ENCODE measurements at regions of chr6 and their contacts with region 1.

Region 1: GRCh38 chr6:149565527-149566409 is at the start of gene GINM1:
- DNase-seq: peak; percentile 93
- ATAC-seq: peak; percentile 90
- H3K4me3 ChIP-seq: peak within 1 kb of the TSS; percentile 97 to 98 (median 98)
- H3K27ac ChIP-seq: peak within 1 kb of the TSS; percentile 87
- H3K4me1 ChIP-seq: peaks cover 42% of the 10 kb centered on the region
- H3K27me3 ChIP-seq: no peaks in the 10 kb centered on the region; a peak in 1 of 5 replicates
- CTCF ChIP-seq: peak; percentile 87
- EP300 ChIP-seq: no peak
- POLR2A ChIP-seq: 0 out of 4 replicates have a peak, but pooled peaks of 1 of the 2 experiments have one; percentile 6
- RAD21 ChIP-seq: peak; percentile 70
- total RNA-seq, gene GINM1: 15.4 and 27.5 TPM in 2 replicates

Region 2: DNA sequence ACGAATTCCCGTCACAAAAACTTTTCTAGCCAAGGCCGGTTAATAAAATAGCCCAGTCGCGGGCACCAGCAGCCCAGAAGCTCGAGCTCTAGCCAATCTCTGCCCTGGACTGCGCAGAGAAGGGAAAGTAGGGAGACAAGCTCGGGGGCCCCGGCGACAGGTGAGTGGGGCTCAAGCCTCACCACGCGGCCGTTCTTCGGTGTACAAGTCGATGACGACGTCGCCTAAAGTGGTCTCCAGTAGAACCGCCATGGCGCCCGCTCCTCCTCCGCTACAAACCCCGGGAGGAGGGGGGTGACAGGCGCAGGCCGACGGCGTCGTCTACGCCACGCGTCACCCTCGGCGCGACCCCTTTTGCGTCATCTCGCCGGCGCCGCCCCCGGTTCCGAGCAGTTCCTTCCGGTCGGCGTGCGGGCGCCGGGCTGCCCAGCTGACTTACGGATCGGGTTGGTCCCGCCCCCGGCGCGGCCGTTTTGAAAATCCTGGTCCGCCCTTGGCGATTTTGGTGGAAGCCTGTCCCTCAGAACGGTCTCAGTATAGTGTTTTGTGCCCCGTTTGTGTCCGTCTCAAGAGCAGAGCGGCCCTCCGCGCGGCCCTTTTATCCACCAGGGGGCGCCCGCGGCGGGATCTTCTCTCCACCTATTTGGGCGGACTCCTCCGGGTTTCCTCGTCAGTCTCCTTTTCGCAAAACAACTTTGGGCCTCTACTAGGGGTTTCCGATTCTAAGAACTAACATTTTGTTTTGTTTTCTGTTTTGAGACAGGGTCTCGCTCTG is 19.8 kb before region 1 on chr6 and contains the start of gene PPIL4:
- CTCF ChIA-PET with region 1: no interaction called
- POLR2A ChIA-PET with region 1: interaction called, 36 read pairs
- in situ Hi-C with region 1: no loop called
- intact Hi-C with region 1: loop called (anchors 1 kb)
- DNase-seq: peak; percentile 89
- ATAC-seq: peak; percentile 88
- H3K4me3 ChIP-seq: peak within 1 kb of the TSS; percentile 87 to 97 (median 91)
- H3K27ac ChIP-seq: peak within 1 kb of the TSS; percentile 96
- H3K4me1 ChIP-seq: peaks cover 43% of the 10 kb centered on the region
- H3K27me3 ChIP-seq: no peaks in the 10 kb centered on the region; a peak in 2 of 5 replicates
- CTCF ChIP-seq: peak; percentile 85
- EP300 ChIP-seq: peak; percentile 56 to 71; a peak in 2 of 4 replicates
- POLR2A ChIP-seq: peak; percentile 81 to 93
- RAD21 ChIP-seq: peak; percentile 70
- total RNA-seq, gene PPIL4: 46.0 and 67.8 TPM in 2 replicates

Region 3: GRCh38 chr6:149648148-149649145 is 82.7 kb after region 1 on chr6 and contains the start of gene KATNA1:
- CTCF ChIA-PET with region 1: no interaction called
- POLR2A ChIA-PET with region 1: interaction called, 4 read pairs
- in situ Hi-C with region 1: loop called (anchors 5 kb)
- intact Hi-C with region 1: loop called (anchors 1 kb)
- DNase-seq: peak; percentile 96
- ATAC-seq: peak; percentile 98
- H3K4me3 ChIP-seq: peak within 1 kb of the TSS; percentile 74 to 85 (median 84)
- H3K27ac ChIP-seq: peak within 1 kb of the TSS; percentile 78
- H3K4me1 ChIP-seq: peaks cover 25% of the 10 kb centered on the region
- H3K27me3 ChIP-seq: no peaks in the 10 kb centered on the region; a peak in 1 of 5 replicates
- CTCF ChIP-seq: peak; percentile 68
- EP300 ChIP-seq: peak in 1 of 2 experiments; percentile 41; a peak in 1 of 4 replicates
- POLR2A ChIP-seq: peak; percentile 94 to 96
- RAD21 ChIP-seq: peak; percentile 71
- total RNA-seq, gene KATNA1: 25.3 and 31.2 TPM in 2 replicates

Region 4: DNA sequence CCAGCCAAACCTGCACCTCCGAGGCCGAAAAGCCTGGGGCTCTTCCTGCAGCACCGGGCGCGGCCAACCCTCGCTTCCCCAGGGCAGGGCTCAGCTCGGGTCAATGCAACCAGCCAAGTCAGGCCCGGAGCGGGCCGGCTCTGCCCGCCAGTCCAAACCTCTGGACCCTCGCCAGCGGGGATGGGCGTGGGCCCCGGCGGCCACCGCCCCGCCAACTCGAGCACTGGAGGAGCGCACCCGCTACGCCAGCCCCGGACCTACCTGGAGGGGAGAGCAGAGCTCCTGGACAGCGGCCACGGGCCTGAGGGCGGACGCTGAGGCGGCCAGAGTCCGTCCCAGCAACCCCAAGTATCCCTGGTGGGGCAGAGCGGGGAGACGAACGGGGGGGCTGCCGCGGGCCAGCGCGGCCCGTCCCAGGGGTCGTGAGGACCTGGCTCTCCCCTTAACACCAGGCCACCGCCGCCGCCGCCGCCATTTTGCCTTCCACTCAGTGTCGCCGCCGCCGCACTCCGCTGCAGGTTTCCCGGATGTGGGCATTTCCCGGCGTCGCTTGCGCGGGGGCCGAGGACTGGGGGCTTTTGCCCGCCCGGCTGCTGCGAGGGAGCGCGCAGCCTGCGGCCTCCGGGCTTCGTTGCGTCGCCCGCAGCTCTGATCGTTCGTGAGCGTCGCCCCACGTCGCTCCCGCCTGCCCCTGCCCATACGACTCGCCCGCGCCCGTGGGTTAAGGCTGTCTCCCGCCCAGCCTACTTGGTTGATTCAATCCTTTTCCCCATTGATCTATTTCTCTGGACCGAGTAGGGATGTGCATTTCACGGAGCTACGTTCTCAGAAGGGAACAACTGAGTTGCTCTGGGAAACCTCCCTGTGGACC is 152.1 kb after region 1 on chr6 and contains the start of gene LATS1:
- CTCF ChIA-PET with region 1: no interaction called
- POLR2A ChIA-PET with region 1: interaction called, 15 read pairs
- in situ Hi-C with region 1: loop called (anchors 10 kb)
- intact Hi-C with region 1: loop called (anchors 5 kb)
- DNase-seq: peak; percentile 81
- ATAC-seq: peak; percentile 94
- H3K4me3 ChIP-seq: peak within 1 kb of the TSS; percentile 79 to 97 (median 96)
- H3K27ac ChIP-seq: peak within 1 kb of the TSS; percentile 97
- H3K4me1 ChIP-seq: peaks cover 23% of the 10 kb centered on the region
- H3K27me3 ChIP-seq: no peaks in the 10 kb centered on the region; a peak in 1 of 5 replicates
- CTCF ChIP-seq: peak; percentile 29; the same call in 1 of the 2 replicates
- EP300 ChIP-seq: peak in 1 of 2 experiments; percentile 51; a peak in 1 of 4 replicates
- POLR2A ChIP-seq: peak; percentile 95 to 99
- RAD21 ChIP-seq: peak; percentile 63
- total RNA-seq, gene LATS1: 12.6 and 16.4 TPM in 2 replicates

Region 5: DNA sequence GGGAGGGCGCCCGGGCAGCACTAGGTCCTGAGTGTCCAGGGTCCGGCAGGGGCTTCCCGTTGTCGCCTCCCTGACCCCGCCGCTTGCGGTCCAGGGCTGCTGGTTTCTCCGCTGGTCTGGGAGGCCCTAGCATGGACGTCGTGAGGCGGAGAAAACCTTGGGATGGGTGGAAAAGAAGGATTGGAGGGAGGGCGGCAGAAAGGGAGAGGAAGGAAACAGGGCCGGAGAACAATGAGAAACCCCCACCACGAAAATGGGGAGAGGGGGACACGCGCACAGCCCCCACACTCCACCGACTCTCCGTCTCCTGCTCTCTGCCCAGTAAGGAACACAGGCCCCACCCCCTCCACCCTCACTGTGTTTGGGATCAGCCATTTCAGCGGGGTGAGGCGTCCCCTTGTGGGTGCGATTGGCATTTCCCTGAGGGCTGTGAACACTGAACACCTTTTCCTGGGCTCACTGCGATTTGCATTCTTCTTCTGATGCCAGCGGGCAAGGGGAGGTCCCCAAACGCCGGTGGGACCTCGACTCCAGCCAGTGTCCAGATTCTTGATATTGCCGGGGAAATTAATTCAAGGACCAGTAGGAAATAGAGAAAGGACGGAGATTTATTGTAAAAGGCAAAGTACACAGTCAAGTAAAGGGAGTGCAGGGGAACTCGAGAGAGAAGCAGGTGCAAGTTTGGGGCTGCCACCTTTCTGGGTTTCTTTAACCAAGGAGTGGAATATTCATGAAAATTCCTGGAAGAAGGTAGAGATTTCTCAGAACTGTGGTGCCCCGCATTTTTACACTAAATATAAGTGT is 360.4 kb after region 1 on chr6:
- CTCF ChIA-PET with region 1: no interaction called
- POLR2A ChIA-PET with region 1: no interaction called
- in situ Hi-C with region 1: no loop called
- intact Hi-C with region 1: loop called (anchors 2 kb)
- DNase-seq: peak; percentile 74
- ATAC-seq: peak; percentile 90
- H3K4me3 ChIP-seq: peak overlapping the region; percentile 65 to 82 (median 71)
- H3K27ac ChIP-seq: no peak overlapping the region
- H3K4me1 ChIP-seq: peaks cover 34% of the 10 kb centered on the region
- H3K27me3 ChIP-seq: peaks cover 13 to 55% of the 10 kb centered on the region in 2 experiments
- CTCF ChIP-seq: peak; percentile 99
- EP300 ChIP-seq: no peak
- POLR2A ChIP-seq: no peak
- RAD21 ChIP-seq: peak; percentile 93

Region 6: DNA sequence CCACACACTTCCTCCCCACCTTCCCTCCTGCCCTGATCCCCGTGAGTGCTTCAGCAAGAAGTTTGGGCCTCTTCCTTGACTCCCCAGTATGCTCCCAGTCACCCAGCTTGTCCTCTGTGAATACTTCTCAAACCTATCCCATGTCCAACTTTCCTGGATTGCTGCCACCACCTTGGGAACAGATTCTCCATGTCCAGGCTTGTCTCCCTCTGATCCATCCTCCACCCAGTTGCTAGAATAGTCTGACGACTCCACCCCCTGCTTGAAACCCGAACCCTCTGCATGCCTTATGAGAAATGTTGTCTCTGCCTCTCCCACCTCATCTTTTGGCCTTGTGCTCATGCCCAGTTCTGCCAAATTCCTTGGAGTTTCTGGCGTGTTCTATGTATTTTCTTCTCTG is 685.1 kb after region 1 on chr6:
- CTCF ChIA-PET with region 1: no interaction called
- POLR2A ChIA-PET with region 1: no interaction called
- in situ Hi-C with region 1: no loop called
- intact Hi-C with region 1: no loop called
- DNase-seq: no peak
- ATAC-seq: no peak
- H3K4me3 ChIP-seq: no peak overlapping the region
- H3K27ac ChIP-seq: no peak overlapping the region
- H3K4me1 ChIP-seq: no peaks in the 10 kb centered on the region
- H3K27me3 ChIP-seq: peaks cover under 1 to 14% of the 10 kb centered on the region in 2 experiments; a peak in 3 of 5 replicates
- CTCF ChIP-seq: no peak
- EP300 ChIP-seq: no peak
- POLR2A ChIP-seq: no peak
- RAD21 ChIP-seq: no peak